ENCODE measurements at regions of chr10 and their contacts with region 1.

Region 1: DNA sequence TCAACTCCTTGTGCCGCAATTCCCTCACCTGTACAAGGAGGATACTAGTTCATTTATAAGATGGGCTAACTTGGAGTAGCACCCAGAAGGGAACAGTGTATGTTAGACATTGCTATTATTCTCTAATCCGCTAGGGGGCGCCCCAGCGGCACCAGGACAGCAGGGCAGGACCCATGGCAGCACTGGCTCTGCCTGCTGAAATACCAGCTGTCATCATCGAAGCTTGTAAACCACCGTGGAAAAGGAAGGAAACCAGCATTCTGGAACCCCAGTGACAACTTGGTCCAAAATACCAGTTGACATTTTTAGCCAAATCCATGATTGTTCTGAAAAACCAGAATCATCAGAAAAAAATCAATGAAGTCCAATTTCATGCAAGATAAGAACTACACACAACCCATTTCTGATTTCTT is 134.4 kb downstream of the ITGA8 start:
- DNase-seq: no peak
- H3K4me3 ChIP-seq: no peak overlapping the region
- CTCF ChIP-seq: peak; percentile 83

Region 2: GRCh38 chr10:15433850-15434537 is 151.3 kb before region 1 on chr10:
- CTCF ChIA-PET with region 1: interaction called, 10 read pairs
- POLR2A ChIA-PET with region 1: no interaction called
- DNase-seq: no peak
- H3K4me3 ChIP-seq: peak overlapping the region; percentile 56
- CTCF ChIP-seq: peak; percentile 36

Region 3: GRCh38 chr10:15472008-15472407 is 113.3 kb before region 1 on chr10:
- CTCF ChIA-PET with region 1: no interaction called
- POLR2A ChIA-PET with region 1: no interaction called
- DNase-seq: no peak
- H3K4me3 ChIP-seq: no peak overlapping the region
- CTCF ChIP-seq: no peak

Region 4: DNA sequence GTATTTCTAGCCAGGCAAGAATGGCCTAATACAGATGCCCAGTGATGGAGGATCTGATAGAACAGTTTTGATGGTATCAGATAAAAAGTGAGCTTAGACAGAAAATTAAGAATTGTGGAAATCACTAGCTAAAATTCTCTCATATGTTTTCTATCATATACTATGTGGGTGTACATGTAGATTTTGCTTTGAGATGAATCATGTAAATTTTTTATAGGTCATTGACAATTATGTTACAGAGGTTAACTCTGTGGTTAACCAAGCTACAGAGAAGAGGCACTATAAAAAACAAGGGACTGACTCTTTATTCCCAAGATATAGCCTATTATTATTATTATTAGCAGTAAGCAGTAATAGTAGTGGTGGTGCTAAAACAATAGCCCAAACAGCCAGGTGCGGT is 22.1 kb before region 1 on chr10:
- CTCF ChIA-PET with region 1: interaction called, 42 read pairs
- POLR2A ChIA-PET with region 1: no interaction called
- DNase-seq: no peak
- H3K4me3 ChIP-seq: no peak overlapping the region
- CTCF ChIP-seq: no peak

Region 5: GRCh38 chr10:15605740-15606369 is 20.5 kb after region 1 on chr10:
- CTCF ChIA-PET with region 1: interaction called, 50 read pairs
- POLR2A ChIA-PET with region 1: no interaction called
- DNase-seq: no peak
- H3K4me3 ChIP-seq: no peak overlapping the region
- CTCF ChIP-seq: no peak

Region 6: DNA sequence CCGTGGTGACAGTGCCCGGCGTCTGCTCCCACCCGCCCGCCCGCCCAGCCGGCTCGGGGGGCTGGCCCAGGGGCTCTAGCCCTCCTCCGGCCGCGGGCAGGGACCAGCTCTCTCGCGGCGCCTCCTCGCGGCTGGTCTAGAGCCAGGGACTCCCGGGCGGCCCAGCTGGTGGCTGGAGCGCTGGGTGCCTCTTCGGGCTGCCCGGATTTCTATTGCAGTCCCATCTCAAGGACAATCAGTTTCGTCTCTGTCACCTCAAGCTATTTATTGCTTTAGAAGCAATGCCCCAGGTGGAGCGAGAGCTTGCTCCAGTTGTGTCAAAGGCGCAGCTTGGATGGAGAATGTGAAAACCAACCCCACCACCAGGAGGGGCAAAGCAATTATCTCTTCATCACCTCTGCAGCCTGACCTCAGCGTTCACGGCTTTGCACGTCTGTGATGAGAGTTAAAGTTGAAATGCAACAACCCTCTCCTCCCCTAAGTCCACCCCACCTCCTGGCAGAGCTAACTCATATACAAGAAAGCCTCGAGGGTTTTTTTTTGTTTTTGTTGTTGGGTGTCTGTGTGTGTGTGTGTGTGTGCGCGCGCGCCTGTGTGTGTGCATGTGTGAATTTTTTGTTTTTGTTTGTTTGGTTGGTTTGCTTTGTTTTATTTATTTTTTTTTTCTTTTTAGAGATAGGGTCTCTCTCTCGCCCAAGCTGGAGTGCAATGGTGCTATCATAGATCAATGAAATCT is 134.8 kb after region 1 on chr10 and contains the start of gene ITGA8:
- CTCF ChIA-PET with region 1: interaction called, 17 read pairs
- POLR2A ChIA-PET with region 1: no interaction called
- DNase-seq: no peak
- H3K4me3 ChIP-seq: peak within 1 kb of the TSS; percentile 55
- CTCF ChIP-seq: peak; percentile 69